ENCODE measurements at regions of chr5 and their contacts with region 1.

Region 1: DNA sequence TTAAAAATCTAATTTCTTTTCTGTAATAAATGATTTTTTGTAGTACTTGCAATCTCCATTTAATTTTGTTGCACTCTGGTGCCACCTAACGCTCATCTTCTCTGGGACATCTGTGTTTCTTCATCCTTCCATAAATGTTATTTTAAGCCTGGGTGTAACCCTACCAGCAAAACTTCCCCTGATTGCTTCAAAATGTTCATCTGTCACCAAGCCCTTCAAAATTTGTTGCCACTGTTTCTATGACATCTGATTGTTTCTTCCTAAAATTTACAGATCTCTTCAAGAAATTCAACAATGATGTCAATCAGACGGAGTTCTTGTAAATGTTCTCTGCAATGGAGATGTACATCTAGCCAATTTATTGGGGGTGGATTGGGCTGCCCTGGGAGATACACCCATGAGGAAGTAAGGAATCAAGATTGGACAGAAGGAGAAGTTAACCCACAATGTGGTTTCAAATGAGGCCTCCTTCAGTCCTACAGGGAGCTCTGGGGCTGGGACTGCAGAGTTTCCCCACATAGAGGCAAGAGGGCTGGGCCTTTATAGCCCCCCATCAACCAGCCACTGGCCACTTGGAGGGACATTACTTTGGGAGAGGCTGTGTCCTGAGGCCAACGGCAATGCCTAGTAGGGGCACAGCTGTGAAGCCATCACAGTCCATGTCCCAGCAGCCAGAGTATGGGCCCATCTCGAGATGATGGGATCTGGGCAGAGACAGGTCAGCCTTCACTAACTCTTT is 23.3 kb downstream of the MCTP1 start:
- DNase-seq: peak; percentile 52
- H3K4me3 Mint-ChIP-seq: no peak overlapping the region
- H3K27ac Mint-ChIP-seq: no peak overlapping the region
- H3K4me1 Mint-ChIP-seq: no peaks in the 10 kb centered on the region
- H3K27me3 Mint-ChIP-seq: peaks cover under 1% of the 10 kb centered on the region
- CTCF ChIP-seq: peak; percentile 53

Region 2: GRCh38 chr5:95251185-95251584 is 10.4 kb before region 1 on chr5:
- CTCF ChIA-PET with region 1: interaction called, 10 read pairs
- POLR2A ChIA-PET with region 1: no interaction called
- intact Hi-C with region 1: no loop called
- DNase-seq: no peak
- H3K4me3 Mint-ChIP-seq: no peak overlapping the region
- H3K27ac Mint-ChIP-seq: no peak overlapping the region
- H3K4me1 Mint-ChIP-seq: peaks cover 8% of the 10 kb centered on the region
- H3K27me3 Mint-ChIP-seq: no peaks in the 10 kb centered on the region
- CTCF ChIP-seq: no peak

Measured in MCF 10A (cell line).